GM12878 (cell line): ENCODE measurements at regions of chr6 and their contacts with region 1.

Region 1: GRCh38 chr6:11460001-11460668 is 77.4 kb upstream of the TMEM170B start:
- DNase-seq: peak; percentile 75
- ATAC-seq: peak; percentile 65
- H3K4me3 ChIP-seq: peak overlapping the region; percentile 28; the same call in 1 of the 2 replicates
- H3K27ac ChIP-seq: peak overlapping the region; percentile 96
- H3K4me1 ChIP-seq: peaks cover 40% of the 10 kb centered on the region
- H3K27me3 ChIP-seq: no peaks in the 10 kb centered on the region
- CTCF ChIP-seq: peak in 2 of 3 experiments; percentile 17 to 21; a peak in 3 of 6 replicates
- EP300 ChIP-seq: 0 out of 4 replicates have a peak, but pooled peaks of 1 of the 2 experiments have one; percentile 7
- POLR2A ChIP-seq: 0 out of 2 replicates have a peak, but pooled peaks have one; percentile 37
- RAD21 ChIP-seq: no peak; the same call in 1 of the 2 replicates

Region 2: GRCh38 chr6:11043961-11044711 is 416.0 kb before region 1 on chr6 and contains the start of gene ELOVL2:
- CTCF ChIA-PET with region 1: no interaction called
- POLR2A ChIA-PET with region 1: no interaction called
- RAD21 ChIA-PET with region 1: no interaction called
- SMC1A ChIA-PET with region 1: no interaction called
- in situ Hi-C with region 1: no loop called
- intact Hi-C with region 1: no loop called
- DNase-seq: no peak
- ATAC-seq: peak; percentile 78
- H3K4me3 ChIP-seq: peak within 1 kb of the TSS; percentile 58
- H3K27ac ChIP-seq: no peak within 1 kb of the TSS
- H3K4me1 ChIP-seq: 0 out of 2 replicates have a peak, but pooled peaks cover 4% of the 10 kb centered on the region
- H3K27me3 ChIP-seq: peaks cover 8 to 22% of the 10 kb centered on the region in 2 experiments
- CTCF ChIP-seq: peak; percentile 33 to 47 (median 42); a peak in 5 of 6 replicates
- EP300 ChIP-seq: no peak
- POLR2A ChIP-seq: no peak
- RAD21 ChIP-seq: peak; percentile 28; the same call in 1 of the 2 replicates
- polyA plus RNA-seq, gene ELOVL2: not detected

Region 3: DNA sequence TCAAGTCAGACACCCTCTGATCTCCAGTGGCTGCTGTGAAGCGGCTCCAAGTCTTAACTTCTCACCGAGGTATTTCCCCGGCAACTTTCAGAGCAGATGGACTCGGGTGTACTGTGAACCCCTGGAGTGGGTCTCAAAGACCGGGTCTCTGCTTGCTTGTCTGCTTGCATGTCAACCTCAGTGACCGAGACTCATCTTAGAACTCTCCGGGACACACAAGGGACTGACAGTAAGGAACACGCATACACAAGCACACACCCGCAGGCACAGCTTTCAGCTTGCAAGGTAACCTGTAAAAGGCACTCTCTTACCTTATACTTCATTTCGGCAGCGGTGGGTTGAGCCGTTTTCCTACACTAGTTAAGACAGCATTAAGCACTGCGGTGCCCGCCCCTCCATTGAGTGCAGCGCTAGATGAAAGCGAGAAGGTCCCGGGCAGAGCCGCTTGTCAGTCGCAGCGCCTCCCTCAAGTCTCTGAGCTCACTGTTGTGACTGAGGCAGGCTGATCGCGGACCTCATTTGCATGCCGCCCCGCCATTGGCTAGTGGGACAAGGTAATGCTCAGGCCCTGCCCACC is 227.9 kb before region 1 on chr6 and contains the start of gene NEDD9:
- CTCF ChIA-PET with region 1: no interaction called
- POLR2A ChIA-PET with region 1: interaction called, 3 read pairs
- RAD21 ChIA-PET with region 1: interaction called, 11 read pairs
- SMC1A ChIA-PET with region 1: interaction called, 28 read pairs
- in situ Hi-C with region 1: no loop called
- intact Hi-C with region 1: no loop called
- DNase-seq: peak; percentile 86
- ATAC-seq: peak; percentile 98
- H3K4me3 ChIP-seq: peak within 1 kb of the TSS; percentile 84
- H3K27ac ChIP-seq: peak within 1 kb of the TSS; percentile 66
- H3K4me1 ChIP-seq: peaks cover 10% of the 10 kb centered on the region; the same call in 1 of the 2 replicates
- H3K27me3 ChIP-seq: no peaks in the 10 kb centered on the region
- CTCF ChIP-seq: no peak
- EP300 ChIP-seq: no peak
- POLR2A ChIP-seq: peak; percentile 96
- RAD21 ChIP-seq: no peak
- polyA plus RNA-seq, gene NEDD9: 4.9 to 6.3 TPM

Region 4: DNA sequence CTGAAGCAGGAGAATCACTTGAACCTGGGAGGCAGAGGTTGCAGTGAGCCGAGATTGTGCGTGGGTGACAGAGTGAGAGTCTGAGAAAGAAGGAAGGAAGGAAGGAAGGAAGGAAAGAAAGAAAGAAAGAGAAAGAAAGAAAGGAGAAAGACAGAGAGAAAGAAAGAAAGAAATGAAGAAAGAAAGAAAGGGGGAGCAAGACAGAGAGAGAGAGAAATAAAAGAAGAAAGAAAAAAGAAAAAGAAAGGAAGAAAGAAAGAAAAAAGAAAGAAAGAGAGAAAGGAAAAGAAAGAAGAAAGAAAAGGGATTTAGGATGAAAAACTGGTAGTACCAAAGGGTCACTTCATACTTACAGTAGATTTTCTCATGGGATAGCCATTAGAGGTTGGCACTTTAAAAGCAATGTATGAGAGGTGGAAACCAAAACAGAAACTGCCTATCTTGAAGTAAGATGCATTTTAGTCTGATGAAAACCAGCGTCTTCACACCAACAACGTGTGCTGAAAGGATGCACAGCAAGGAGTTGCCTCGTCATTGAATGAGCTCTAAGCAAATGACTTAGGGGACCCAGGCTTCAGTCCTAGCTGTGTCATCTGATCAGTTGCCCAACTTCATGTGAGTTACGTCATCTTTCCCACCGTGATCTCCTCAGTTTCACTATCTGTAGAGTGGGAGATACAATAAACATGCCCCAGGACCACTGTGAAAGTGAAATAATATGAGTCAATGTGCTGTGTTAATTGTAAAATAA is 93.8 kb before region 1 on chr6:
- CTCF ChIA-PET with region 1: interaction called, 3 read pairs
- POLR2A ChIA-PET with region 1: interaction called, 9 read pairs
- RAD21 ChIA-PET with region 1: interaction called, 59 read pairs
- SMC1A ChIA-PET with region 1: interaction called, 48 read pairs
- in situ Hi-C with region 1: no loop called
- intact Hi-C with region 1: no loop called
- DNase-seq: peak; percentile 89
- ATAC-seq: peak; percentile 86
- H3K4me3 ChIP-seq: peak overlapping the region; percentile 15; the same call in 1 of the 2 replicates
- H3K27ac ChIP-seq: peak overlapping the region; percentile 78
- H3K4me1 ChIP-seq: peaks cover 64% of the 10 kb centered on the region
- H3K27me3 ChIP-seq: no peaks in the 10 kb centered on the region
- CTCF ChIP-seq: no peak
- EP300 ChIP-seq: 0 out of 4 replicates have a peak, but pooled peaks of 1 of the 2 experiments have one; percentile 12
- POLR2A ChIP-seq: peak; percentile 45; the same call in 1 of the 2 replicates
- RAD21 ChIP-seq: no peak

Region 5: DNA sequence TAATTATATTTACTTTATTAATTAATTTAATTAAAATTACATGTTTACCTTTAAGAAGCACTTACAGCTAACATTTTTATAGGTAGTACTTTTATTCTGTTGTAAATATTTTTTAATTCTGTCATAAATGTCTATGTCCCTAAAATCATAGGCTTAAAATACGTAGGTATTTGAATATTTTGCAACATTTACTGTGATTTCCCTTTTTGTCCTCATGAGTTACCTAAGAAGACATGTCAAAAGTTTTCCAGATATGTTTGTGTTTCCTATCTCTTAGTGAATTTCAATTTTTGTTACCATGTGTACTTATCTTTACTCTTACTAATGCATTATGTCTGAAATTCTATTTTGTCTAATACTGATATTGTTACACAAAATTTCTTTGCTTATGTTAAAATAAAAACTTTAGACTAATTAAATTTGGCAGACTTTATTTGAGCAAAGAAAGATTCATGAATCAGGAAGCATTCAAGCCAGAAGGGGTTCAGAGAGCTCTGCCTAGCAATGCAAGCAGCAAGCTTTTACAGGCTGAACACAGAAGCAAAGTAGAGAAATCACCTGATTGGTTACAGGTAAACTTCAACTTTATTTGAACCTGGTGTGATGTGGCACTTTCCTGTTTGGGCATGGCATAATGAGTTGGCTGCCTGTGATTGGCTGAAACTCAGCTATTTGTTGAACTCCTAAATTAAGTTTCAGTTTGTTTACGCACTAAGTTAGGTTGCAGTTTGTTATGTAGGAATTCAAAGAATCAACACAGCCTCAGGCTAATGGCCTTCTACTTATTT is 45.8 kb before region 1 on chr6:
- CTCF ChIA-PET with region 1: interaction called, 25 read pairs
- POLR2A ChIA-PET with region 1: interaction called, 8 read pairs
- RAD21 ChIA-PET with region 1: interaction called, 49 read pairs
- SMC1A ChIA-PET with region 1: interaction called, 57 read pairs
- in situ Hi-C with region 1: no loop called
- intact Hi-C with region 1: loop called (anchors 2 kb)
- DNase-seq: peak; percentile 72
- ATAC-seq: peak; percentile 79
- H3K4me3 ChIP-seq: no peak overlapping the region
- H3K27ac ChIP-seq: 0 out of 2 replicates have a peak overlapping the region, but pooled peaks have one; percentile 4
- H3K4me1 ChIP-seq: peaks cover 30% of the 10 kb centered on the region
- H3K27me3 ChIP-seq: no peaks in the 10 kb centered on the region
- CTCF ChIP-seq: no peak
- EP300 ChIP-seq: no peak
- POLR2A ChIP-seq: no peak
- RAD21 ChIP-seq: no peak

Region 6: GRCh38 chr6:11445146-11445545 is 15.0 kb before region 1 on chr6:
- CTCF ChIA-PET with region 1: interaction called, 5 read pairs
- POLR2A ChIA-PET with region 1: interaction called, 4 read pairs
- RAD21 ChIA-PET with region 1: interaction called, 30 read pairs
- SMC1A ChIA-PET with region 1: interaction called, 49 read pairs
- in situ Hi-C with region 1: no loop called
- intact Hi-C with region 1: loop called (anchors 2 kb)
- DNase-seq: no peak
- ATAC-seq: peak; percentile 23
- H3K4me3 ChIP-seq: no peak overlapping the region
- H3K27ac ChIP-seq: peak overlapping the region; percentile 27
- H3K4me1 ChIP-seq: peaks cover 3% of the 10 kb centered on the region; the same call in 1 of the 2 replicates
- H3K27me3 ChIP-seq: no peaks in the 10 kb centered on the region
- CTCF ChIP-seq: no peak
- EP300 ChIP-seq: no peak
- POLR2A ChIP-seq: no peak
- RAD21 ChIP-seq: no peak